Testis (tissue), 5 donors: ENCODE measurements at regions of chr3 and their contacts with region 1.

Region 1: DNA sequence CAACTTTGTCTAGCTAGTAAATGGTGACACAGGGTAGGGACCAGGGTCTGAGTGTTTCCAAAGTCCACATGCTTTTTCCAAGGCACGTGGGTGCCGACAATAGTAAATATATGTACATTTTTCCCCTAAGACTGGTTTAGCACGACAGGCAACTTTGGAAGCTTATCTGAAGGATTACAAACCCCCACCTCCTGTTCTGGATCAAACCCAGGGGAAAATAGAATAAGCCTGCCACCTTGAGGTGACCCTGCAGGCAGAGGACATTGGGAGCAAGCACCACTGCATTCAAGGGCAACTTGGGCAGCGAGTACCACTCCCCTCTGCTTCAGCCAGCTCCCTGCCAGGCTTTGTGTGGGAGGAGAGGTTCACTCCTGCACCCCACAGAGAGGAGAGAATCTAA is 44.8 kb downstream of the KBTBD12 start:
- DNase-seq: peak; percentile 40
- H3K4me3 ChIP-seq: no peak overlapping the region
- H3K27ac ChIP-seq: no peak overlapping the region
- H3K4me1 ChIP-seq: no peaks in the 10 kb centered on the region
- H3K27me3 ChIP-seq: no peaks in the 10 kb centered on the region
- CTCF ChIP-seq: peak; percentile 26 to 52 (median 31)
- POLR2A ChIP-seq: no peak

Region 2: GRCh38 chr3:127652231-127652995 is 307.4 kb before region 1 on chr3:
- intact Hi-C with region 1: loop called (anchors 10 kb)
- DNase-seq: peak; percentile 60
- H3K4me3 ChIP-seq: no peak overlapping the region
- H3K27ac ChIP-seq: no peak overlapping the region
- H3K4me1 ChIP-seq: peaks cover 7% of the 10 kb centered on the region
- H3K27me3 ChIP-seq: no peaks in the 10 kb centered on the region
- CTCF ChIP-seq: peak; percentile 53 to 81 (median 58)
- POLR2A ChIP-seq: no peak